AG04449 (cell line): ENCODE measurements at regions of chr18 and their contacts with region 1.

Region 1: GRCh38 chr18:3771121-3771971 is 321.4 kb downstream of the TGIF1 start:
- DNase-seq: peak; percentile 78
- H3K4me3 ChIP-seq: peak overlapping the region; percentile 47
- CTCF ChIP-seq: peak; percentile 99

Region 2: GRCh38 chr18:3703732-3704176 is 67.6 kb before region 1 on chr18:
- CTCF ChIA-PET with region 1: interaction called, 14 read pairs
- POLR2A ChIA-PET with region 1: no interaction called
- DNase-seq: peak; percentile 12
- H3K4me3 ChIP-seq: no peak overlapping the region
- CTCF ChIP-seq: peak; percentile 81

Region 3: GRCh38 chr18:3782901-3783300 is 11.6 kb after region 1 on chr18:
- CTCF ChIA-PET with region 1: interaction called, 45 read pairs
- POLR2A ChIA-PET with region 1: no interaction called
- DNase-seq: no peak
- H3K4me3 ChIP-seq: no peak overlapping the region
- CTCF ChIP-seq: no peak

Region 4: GRCh38 chr18:3806656-3807055 is 35.3 kb after region 1 on chr18:
- CTCF ChIA-PET with region 1: interaction called, 10 read pairs
- POLR2A ChIA-PET with region 1: no interaction called
- DNase-seq: no peak
- H3K4me3 ChIP-seq: no peak overlapping the region
- CTCF ChIP-seq: no peak

Region 5: DNA sequence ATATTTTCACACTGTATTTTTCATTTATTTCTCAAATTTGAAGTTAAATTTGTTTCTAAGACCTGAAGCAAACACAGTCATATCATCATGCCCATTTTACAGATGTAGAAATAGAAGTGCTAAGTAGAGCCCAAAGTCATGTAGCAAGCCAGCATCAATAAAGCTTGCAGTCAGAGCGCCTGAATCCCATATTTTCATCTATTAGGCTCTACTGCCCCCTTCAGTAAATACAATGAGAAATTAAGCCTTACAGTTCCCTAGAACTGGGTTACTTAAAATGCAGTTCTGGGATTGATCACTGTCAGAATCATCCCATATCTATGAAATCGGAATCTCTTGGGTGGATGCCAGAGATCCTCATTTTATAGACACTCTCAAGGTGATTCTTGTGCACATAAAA is 98.5 kb after region 1 on chr18:
- CTCF ChIA-PET with region 1: interaction called, 237 read pairs
- POLR2A ChIA-PET with region 1: no interaction called
- DNase-seq: no peak
- H3K4me3 ChIP-seq: no peak overlapping the region
- CTCF ChIP-seq: peak; percentile 28

Region 6: GRCh38 chr18:4068552-4069158 is 297.3 kb after region 1 on chr18:
- CTCF ChIA-PET with region 1: interaction called, 13 read pairs
- POLR2A ChIA-PET with region 1: no interaction called
- DNase-seq: no peak
- H3K4me3 ChIP-seq: no peak overlapping the region
- CTCF ChIP-seq: peak; percentile 68